Endothelial cell of umbilical vein (primary cell): ENCODE measurements at regions of chr17 and their contacts with region 1.

Region 1: DNA sequence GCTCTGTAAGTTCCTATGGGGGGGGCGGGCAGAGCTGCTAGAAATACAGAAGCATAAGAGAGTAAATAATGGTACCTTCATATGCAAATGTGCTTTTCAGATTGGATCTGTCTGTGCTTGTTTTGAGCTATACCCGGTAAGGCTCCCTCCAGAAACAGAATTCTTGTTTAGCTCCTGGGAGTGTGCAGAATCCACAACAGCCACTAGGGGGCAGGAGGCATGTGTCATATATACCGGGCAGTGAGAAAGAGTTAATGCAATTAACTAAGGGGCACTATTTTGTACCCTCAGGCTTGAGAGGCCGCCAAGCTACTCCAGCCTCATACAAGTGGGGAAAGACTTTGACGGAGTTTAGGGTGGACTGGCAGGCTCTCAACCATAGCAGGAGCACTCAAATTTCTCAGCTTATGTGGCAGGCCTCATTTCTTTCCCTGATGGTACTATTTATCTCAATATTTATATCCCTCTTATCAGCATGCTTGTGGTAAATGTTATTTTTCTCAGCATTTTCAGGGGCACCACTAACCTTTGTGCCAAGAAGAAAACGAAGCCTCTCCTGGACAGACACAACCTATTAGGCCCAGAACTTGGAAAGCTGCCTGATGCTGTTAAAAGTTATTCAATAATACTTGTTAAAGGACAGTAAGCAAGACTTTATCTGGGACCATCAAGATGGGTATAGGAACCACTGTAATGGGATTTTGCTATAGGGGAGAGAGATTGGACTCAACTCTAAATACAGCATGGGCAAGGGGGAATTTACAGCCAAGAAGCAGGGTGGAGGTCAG is 10.7 kb upstream of the CENPV start:
- DNase-seq: peak; percentile 70
- H3K4me3 ChIP-seq: no peak overlapping the region
- H3K27ac ChIP-seq: no peak overlapping the region
- H3K4me1 ChIP-seq: no peaks in the 10 kb centered on the region
- H3K27me3 ChIP-seq: no peaks in the 10 kb centered on the region
- CTCF ChIP-seq: peak; percentile 85 to 92
- POLR2A ChIP-seq: no peak

Region 2: DNA sequence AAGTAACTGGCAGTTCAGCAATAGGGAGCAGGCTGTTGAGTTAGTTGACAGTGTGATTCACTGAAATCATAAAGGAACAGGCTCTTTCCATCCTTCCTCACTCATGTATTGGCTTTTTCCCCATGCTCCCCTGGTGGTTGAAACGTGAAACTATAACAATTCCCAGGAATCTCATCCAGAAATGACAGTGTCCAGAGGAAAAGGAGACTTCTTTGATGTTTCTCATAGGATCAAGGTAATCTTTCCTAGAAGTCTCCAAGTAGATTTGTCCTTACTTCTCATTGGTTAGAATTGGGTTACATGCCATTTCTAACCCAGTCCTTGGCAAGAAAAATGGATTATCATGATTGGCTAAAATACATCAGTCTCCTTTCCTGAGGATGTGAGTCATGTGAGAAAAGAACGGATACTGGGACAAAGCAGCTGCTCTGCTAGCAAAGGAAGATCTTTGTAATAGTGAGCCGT is 350.0 kb before region 1 on chr17:
- CTCF ChIA-PET with region 1: no interaction called
- POLR2A ChIA-PET with region 1: no interaction called
- dilution Hi-C with region 1: no loop called
- intact Hi-C with region 1: no loop called
- DNase-seq: peak; percentile 95
- H3K4me3 ChIP-seq: no peak overlapping the region
- H3K27ac ChIP-seq: peak overlapping the region; percentile 84
- H3K4me1 ChIP-seq: peaks cover 34% of the 10 kb centered on the region
- H3K27me3 ChIP-seq: no peaks in the 10 kb centered on the region
- CTCF ChIP-seq: peak; percentile 53 to 54
- POLR2A ChIP-seq: peak; percentile 3

Region 3: DNA sequence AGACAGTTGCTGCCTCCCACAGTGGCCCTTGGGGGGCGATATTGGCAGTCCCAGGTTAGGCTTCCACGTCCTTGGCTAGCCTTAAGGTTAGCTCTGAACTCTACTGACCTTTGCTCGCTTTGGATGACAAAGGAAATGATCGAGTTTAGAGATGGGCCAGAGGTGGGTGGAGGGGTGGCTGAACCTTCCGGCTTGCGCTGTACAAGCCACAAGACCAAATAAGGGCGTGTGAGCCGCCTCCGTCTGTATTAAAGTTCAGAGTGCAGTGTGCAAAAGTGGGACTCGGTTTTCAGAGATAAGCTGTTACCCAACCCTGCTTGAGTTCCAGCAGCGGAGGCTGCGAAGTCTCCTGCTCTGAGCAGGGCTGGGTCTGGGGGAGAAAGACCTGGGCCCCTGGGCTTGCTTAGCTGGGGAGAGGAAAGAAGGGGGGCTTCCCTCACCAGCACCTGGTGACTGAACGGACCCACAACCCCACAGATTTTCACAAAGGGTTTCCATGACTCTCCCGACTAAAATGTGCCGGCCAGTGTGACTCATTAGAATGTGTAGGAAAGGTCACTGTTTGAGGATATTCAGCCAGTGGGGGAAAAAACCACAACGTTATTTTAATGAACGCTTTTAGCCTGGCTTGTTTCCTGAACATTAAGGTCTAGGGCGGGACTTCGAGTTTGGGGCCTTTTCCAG is 77.8 kb before region 1 on chr17:
- CTCF ChIA-PET with region 1: interaction called, 11 read pairs
- POLR2A ChIA-PET with region 1: no interaction called
- dilution Hi-C with region 1: no loop called
- intact Hi-C with region 1: no loop called
- DNase-seq: peak; percentile 96
- H3K4me3 ChIP-seq: peak overlapping the region in 1 of 3 experiments; percentile 16
- H3K27ac ChIP-seq: peak overlapping the region; percentile 96
- H3K4me1 ChIP-seq: peaks cover 55% of the 10 kb centered on the region
- H3K27me3 ChIP-seq: no peaks in the 10 kb centered on the region
- CTCF ChIP-seq: peak; percentile 54 to 56
- POLR2A ChIP-seq: peak; percentile 83

Region 4: GRCh38 chr17:16353317-16354174 is 10.4 kb before region 1 on chr17 and contains the start of gene CENPV:
- CTCF ChIA-PET with region 1: interaction called, 73 read pairs
- POLR2A ChIA-PET with region 1: no interaction called
- dilution Hi-C with region 1: no loop called
- intact Hi-C with region 1: no loop called
- DNase-seq: peak; percentile 47
- H3K4me3 ChIP-seq: peak within 1 kb of the TSS; percentile 48 to 60 (median 49)
- H3K27ac ChIP-seq: peak within 1 kb of the TSS; percentile 2
- H3K4me1 ChIP-seq: peaks cover 10% of the 10 kb centered on the region
- H3K27me3 ChIP-seq: no peaks in the 10 kb centered on the region
- CTCF ChIP-seq: peak in 1 of 2 donors; percentile 9
- POLR2A ChIP-seq: no peak
- total RNA-seq, gene CENPV: 41.6 and 44.0 TPM in 2 replicates

Region 5: GRCh38 chr17:16415031-16415924 is 51.3 kb after region 1 on chr17 and contains the start of gene TRPV2:
- CTCF ChIA-PET with region 1: interaction called, 7 read pairs
- POLR2A ChIA-PET with region 1: no interaction called
- dilution Hi-C with region 1: no loop called
- intact Hi-C with region 1: loop called (anchors 10 kb)
- DNase-seq: no peak
- H3K4me3 ChIP-seq: no peak within 1 kb of the TSS
- H3K27ac ChIP-seq: no peak within 1 kb of the TSS
- H3K4me1 ChIP-seq: peaks cover 23% of the 10 kb centered on the region
- H3K27me3 ChIP-seq: no peaks in the 10 kb centered on the region
- CTCF ChIP-seq: peak in 1 of 2 donors; percentile 13
- POLR2A ChIP-seq: no peak
- total RNA-seq, gene TRPV2: 6.7 and 10.6 TPM in 2 replicates

Region 6: DNA sequence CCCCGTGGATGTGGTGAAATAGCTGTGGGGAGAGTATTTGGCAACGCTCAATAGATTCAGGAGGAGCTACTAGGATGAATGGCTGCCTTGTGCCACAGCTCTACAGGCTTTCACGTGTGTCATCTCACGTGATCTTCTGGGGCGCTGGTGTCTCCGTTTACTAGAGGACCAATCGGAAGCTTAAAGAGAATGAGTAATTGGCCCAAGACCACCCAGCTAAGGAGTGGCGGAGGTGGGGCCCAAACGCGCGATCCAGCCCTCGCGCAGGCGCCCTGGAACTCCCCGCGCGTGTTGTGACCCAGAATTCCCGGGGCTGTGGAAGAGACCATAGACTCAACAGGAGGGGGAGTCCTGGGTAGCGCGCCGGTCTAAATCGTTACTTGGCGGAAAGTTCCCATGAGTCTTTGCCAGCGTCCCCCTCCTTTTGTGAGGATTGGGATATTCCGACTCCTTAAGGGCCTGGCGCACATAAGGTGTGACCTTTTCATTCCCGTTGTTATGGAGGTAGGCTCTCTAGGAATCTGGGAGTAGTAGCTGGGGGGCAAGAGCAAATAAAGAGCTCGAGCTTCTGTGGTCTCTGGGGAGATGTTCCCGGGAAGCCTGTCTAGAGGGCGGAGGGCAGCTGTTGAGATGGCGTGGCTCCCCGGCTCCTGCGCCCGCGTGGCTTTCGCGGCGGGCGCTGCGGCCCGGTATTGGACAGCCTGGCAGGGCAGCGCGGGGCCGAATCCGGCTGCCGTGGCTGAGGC is 74.8 kb after region 1 on chr17:
- CTCF ChIA-PET with region 1: interaction called, 19 read pairs
- POLR2A ChIA-PET with region 1: interaction called, 5 read pairs
- dilution Hi-C with region 1: no loop called
- intact Hi-C with region 1: no loop called
- DNase-seq: peak; percentile 100
- H3K4me3 ChIP-seq: peak overlapping the region; percentile 77 to 97 (median 89)
- H3K27ac ChIP-seq: peak overlapping the region; percentile 67
- H3K4me1 ChIP-seq: peaks cover 35% of the 10 kb centered on the region
- H3K27me3 ChIP-seq: no peaks in the 10 kb centered on the region
- CTCF ChIP-seq: no peak
- POLR2A ChIP-seq: peak; percentile 99

Region 7: DNA sequence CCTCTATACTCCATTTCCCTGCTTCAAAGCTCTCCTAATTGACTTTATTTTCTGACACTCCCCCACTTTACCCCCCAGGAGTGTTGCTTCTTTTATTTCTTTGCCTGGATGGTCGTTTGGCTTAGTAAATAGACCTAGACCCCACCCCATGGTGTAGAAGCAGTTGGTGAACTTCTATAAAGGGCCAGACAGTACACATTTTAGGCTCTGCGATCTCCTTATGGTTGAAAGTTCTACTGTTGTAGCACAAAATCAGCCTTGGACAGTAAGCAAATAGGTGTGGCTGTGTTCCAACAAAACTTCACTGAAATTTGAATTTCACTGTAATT is 173.2 kb after region 1 on chr17:
- CTCF ChIA-PET with region 1: interaction called, 11 read pairs
- POLR2A ChIA-PET with region 1: no interaction called
- dilution Hi-C with region 1: no loop called
- intact Hi-C with region 1: no loop called
- DNase-seq: no peak
- H3K4me3 ChIP-seq: no peak overlapping the region
- H3K27ac ChIP-seq: no peak overlapping the region
- H3K4me1 ChIP-seq: peaks cover 2% of the 10 kb centered on the region
- H3K27me3 ChIP-seq: peaks cover 3 to 4% of the 10 kb centered on the region in 2 experiments
- CTCF ChIP-seq: no peak
- POLR2A ChIP-seq: no peak

Region 8: GRCh38 chr17:16649585-16649984 is 285.6 kb after region 1 on chr17:
- CTCF ChIA-PET with region 1: no interaction called
- POLR2A ChIA-PET with region 1: no interaction called
- dilution Hi-C with region 1: no loop called
- intact Hi-C with region 1: no loop called
- DNase-seq: no peak
- H3K4me3 ChIP-seq: no peak overlapping the region
- H3K27ac ChIP-seq: no peak overlapping the region
- H3K4me1 ChIP-seq: peaks cover 11% of the 10 kb centered on the region
- H3K27me3 ChIP-seq: peaks cover 0 to 2% of the 10 kb centered on the region in 2 experiments
- CTCF ChIP-seq: no peak
- POLR2A ChIP-seq: no peak